Activated CD4-positive, alpha-beta T cell treated with anti-CD3 and anti-CD28 coated beads, Interleukin-2, amount 10 ng/mL, durations not matched to agents 7 days and 5 days (primary cell): ENCODE measurements at regions of chr6 and their contacts with region 1.

Region 1: DNA sequence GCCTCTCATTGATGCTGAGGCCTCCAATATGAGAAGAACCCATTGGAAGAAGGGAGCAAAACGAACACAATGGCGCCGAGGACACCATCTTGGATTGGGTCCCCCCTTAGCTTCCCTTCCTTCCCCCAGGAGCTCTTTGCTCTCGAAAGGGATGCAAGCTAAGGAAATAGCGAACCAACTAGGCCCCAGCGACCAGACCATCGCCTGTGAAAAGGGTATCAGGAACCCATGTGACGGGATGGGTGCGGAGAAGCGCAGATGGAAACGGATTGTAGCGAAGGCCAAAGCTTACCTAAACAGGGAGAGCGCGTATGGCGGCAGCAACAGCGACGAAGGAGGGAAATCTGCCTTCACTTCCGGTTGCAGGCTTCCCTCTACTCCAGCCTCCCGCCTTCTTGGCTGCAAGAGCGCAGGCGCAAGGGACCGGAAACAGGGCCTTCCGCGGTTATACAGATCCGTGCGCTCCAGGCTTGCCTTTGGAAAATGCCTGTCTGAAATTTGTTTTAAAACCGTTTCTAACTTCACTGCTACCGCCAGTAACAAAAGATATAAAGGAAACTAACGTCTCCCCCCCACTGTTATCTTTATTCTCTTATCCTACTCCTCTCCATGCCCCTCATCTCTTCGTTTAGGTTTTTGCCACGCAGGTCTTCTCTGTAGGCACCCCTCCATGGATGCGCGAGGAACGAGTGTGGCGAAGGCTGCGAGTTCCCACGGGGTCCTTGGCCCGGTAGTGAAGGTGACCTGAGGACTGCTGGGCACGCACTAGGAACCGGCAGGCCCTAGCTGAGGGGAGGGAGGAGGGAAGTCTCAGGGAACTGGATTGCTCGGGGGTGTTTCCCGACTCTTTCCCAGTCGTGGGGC is at the start of gene DDX39B:
- DNase-seq: peak; percentile 96
- H3K4me3 Mint-ChIP-seq: peak within 1 kb of the TSS; percentile 98
- H3K27ac Mint-ChIP-seq: peak within 1 kb of the TSS; percentile 99
- H3K4me1 Mint-ChIP-seq: peaks cover 54% of the 10 kb centered on the region
- H3K27me3 Mint-ChIP-seq: no peaks in the 10 kb centered on the region
- total RNA-seq, gene DDX39B: 420 to 442 TPM

Region 2: GRCh38 chr6:31493875-31494694 is 47.8 kb before region 1 on chr6:
- CTCF ChIA-PET with region 1: interaction called, 9 read pairs
- POLR2A ChIA-PET with region 1: interaction called, 10 read pairs
- DNase-seq: peak; percentile 80
- H3K4me3 Mint-ChIP-seq: peak overlapping the region; percentile 82
- H3K27ac Mint-ChIP-seq: peak overlapping the region; percentile 96
- H3K4me1 Mint-ChIP-seq: peaks cover 56% of the 10 kb centered on the region
- H3K27me3 Mint-ChIP-seq: no peaks in the 10 kb centered on the region

Region 3: GRCh38 chr6:31529329-31530150 is 12.3 kb before region 1 on chr6:
- CTCF ChIA-PET with region 1: interaction called, 14 read pairs
- POLR2A ChIA-PET with region 1: no interaction called
- DNase-seq: no peak
- H3K4me3 Mint-ChIP-seq: no peak overlapping the region
- H3K27ac Mint-ChIP-seq: no peak overlapping the region
- H3K4me1 Mint-ChIP-seq: peaks cover 8% of the 10 kb centered on the region
- H3K27me3 Mint-ChIP-seq: no peaks in the 10 kb centered on the region

Region 4: GRCh38 chr6:31575335-31575901 is 33.5 kb after region 1 on chr6 and contains the start of gene TNF:
- CTCF ChIA-PET with region 1: interaction called, 30 read pairs
- POLR2A ChIA-PET with region 1: interaction called, 13 read pairs
- DNase-seq: peak; percentile 82
- H3K4me3 Mint-ChIP-seq: peak within 1 kb of the TSS; percentile 90
- H3K27ac Mint-ChIP-seq: peak within 1 kb of the TSS; percentile 88
- H3K4me1 Mint-ChIP-seq: peaks cover 90% of the 10 kb centered on the region
- H3K27me3 Mint-ChIP-seq: no peaks in the 10 kb centered on the region
- total RNA-seq, gene TNF: 46.5 to 47.1 TPM

Region 5: GRCh38 chr6:31702819-31703522 is 161.1 kb after region 1 on chr6 and contains the start of gene ABHD16A:
- CTCF ChIA-PET with region 1: no interaction called
- POLR2A ChIA-PET with region 1: no interaction called
- DNase-seq: peak; percentile 98
- H3K4me3 Mint-ChIP-seq: peak within 1 kb of the TSS; percentile 96
- H3K27ac Mint-ChIP-seq: peak within 1 kb of the TSS; percentile 96
- H3K4me1 Mint-ChIP-seq: peaks cover 27% of the 10 kb centered on the region
- H3K27me3 Mint-ChIP-seq: no peaks in the 10 kb centered on the region
- total RNA-seq, gene ABHD16A: 47.2 to 54.1 TPM